Activated CD4-positive, alpha-beta T cell treated with anti-CD3 and anti-CD28 coated beads for 36 hours (primary cell): ENCODE measurements at regions of chr10 and their contacts with region 1.

Region 1: DNA sequence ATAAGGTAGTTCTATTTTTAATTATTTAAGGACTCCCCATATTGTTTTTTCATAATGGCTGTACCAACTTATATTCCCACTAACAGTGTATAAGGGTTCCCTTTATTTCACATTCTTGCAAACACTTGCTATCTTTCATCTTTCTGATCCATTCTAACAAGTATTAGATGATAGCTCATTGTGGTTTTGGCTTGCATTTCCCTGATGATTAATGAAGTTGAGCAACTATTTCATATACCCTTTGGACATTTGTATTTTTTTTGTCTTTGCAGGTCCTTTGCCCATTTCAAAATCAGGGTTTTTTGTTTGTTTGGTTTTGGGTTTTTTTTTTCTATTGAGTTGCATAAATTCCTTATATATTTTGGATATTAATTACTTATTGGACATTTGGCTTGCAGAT is 107.2 kb downstream of the EPC1 start:
- DNase-seq: no peak
- ATAC-seq: no peak
- H3K4me3 Mint-ChIP-seq: no peak overlapping the region
- H3K27ac Mint-ChIP-seq: no peak overlapping the region
- H3K4me1 Mint-ChIP-seq: peaks cover 13% of the 10 kb centered on the region
- H3K27me3 Mint-ChIP-seq: no peaks in the 10 kb centered on the region

Region 2: DNA sequence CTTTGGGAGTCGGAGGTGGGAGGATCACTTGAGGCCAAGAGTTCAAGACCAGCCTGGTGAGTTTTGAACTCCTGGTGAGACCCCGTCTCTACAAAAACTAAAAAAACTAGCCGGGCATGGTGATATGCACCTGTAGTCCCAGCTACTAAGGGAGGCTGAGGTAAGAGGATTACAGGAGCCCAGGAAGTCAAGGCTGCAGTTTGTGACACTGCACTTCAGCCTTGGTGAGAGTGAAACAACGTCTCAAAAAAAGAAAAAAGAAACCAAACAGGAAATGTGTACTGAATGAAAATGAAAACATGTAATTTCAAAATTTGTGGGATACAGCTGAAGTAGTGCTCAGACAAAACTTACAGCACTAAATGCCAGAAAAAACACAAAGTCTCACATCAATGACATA is 318.7 kb before region 1 on chr10:
- CTCF ChIA-PET with region 1: no interaction called
- POLR2A ChIA-PET with region 1: no interaction called
- intact Hi-C with region 1: loop called in 1 of 2 experiments (anchors 5 kb)
- DNase-seq: peak; percentile 32
- ATAC-seq: peak; percentile 75
- H3K4me3 Mint-ChIP-seq: peak overlapping the region; percentile 59
- H3K27ac Mint-ChIP-seq: peak overlapping the region; percentile 88
- H3K4me1 Mint-ChIP-seq: peaks cover 73% of the 10 kb centered on the region
- H3K27me3 Mint-ChIP-seq: no peaks in the 10 kb centered on the region

Region 3: DNA sequence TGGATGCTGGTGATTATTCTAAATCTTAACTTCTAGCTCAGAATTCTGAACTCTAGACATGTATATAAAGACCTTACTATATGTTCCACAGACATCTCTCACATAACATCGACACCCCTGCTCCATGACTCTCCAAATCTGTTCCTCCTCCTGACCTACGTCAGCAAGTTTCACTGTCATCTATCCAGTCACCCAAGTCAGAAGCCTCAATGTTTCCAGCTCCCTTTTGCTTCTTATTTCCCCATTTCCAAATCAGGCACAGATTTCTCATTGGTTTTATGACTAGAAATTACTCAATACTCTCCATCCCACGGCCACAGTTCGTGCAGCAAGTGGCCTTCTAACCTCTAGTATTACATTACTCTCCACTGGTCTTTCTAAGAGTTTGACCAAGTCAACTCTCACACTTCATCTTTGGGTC is 78.7 kb after region 1 on chr10:
- CTCF ChIA-PET with region 1: interaction called, 6 read pairs
- POLR2A ChIA-PET with region 1: no interaction called
- intact Hi-C with region 1: loop called in 1 of 2 experiments (anchors 1 kb)
- DNase-seq: peak; percentile 38
- ATAC-seq: peak; percentile 71
- H3K4me3 Mint-ChIP-seq: peak overlapping the region; percentile 1
- H3K27ac Mint-ChIP-seq: peak overlapping the region; percentile 69
- H3K4me1 Mint-ChIP-seq: peaks cover 87% of the 10 kb centered on the region
- H3K27me3 Mint-ChIP-seq: no peaks in the 10 kb centered on the region

Region 4: DNA sequence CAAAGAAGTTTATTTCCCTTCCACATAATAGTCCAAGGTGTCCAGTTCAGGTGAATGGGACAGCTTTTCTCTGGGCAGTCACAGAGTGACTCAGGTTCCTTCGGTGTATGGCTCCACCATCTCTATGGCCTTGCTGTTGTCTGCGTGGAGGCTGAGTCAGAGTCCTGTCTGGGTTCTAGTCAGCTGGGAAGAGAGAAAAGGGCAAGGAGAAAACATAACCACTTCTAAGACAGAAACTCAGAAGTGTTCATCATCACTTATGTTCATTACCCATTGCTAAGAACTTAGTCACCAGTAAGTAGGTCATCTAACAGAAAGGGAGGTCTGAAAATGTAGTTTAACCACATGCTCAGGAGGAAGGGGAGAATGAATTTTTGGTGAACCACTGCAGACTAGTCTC is 173.7 kb after region 1 on chr10:
- CTCF ChIA-PET with region 1: no interaction called
- POLR2A ChIA-PET with region 1: no interaction called
- intact Hi-C with region 1: loop called in 1 of 2 experiments (anchors 1 kb)
- DNase-seq: peak; percentile 73
- ATAC-seq: peak; percentile 98
- H3K4me3 Mint-ChIP-seq: no peak overlapping the region
- H3K27ac Mint-ChIP-seq: no peak overlapping the region
- H3K4me1 Mint-ChIP-seq: peaks cover 9% of the 10 kb centered on the region
- H3K27me3 Mint-ChIP-seq: no peaks in the 10 kb centered on the region

Region 5: GRCh38 chr10:32481606-32482005 is 241.8 kb after region 1 on chr10:
- CTCF ChIA-PET with region 1: no interaction called
- POLR2A ChIA-PET with region 1: no interaction called
- intact Hi-C with region 1: no loop called
- DNase-seq: no peak
- ATAC-seq: no peak
- H3K4me3 Mint-ChIP-seq: no peak overlapping the region
- H3K27ac Mint-ChIP-seq: no peak overlapping the region
- H3K4me1 Mint-ChIP-seq: no peaks in the 10 kb centered on the region
- H3K27me3 Mint-ChIP-seq: no peaks in the 10 kb centered on the region

Region 6: GRCh38 chr10:33134011-33134751 is 894.4 kb after region 1 on chr10:
- CTCF ChIA-PET with region 1: no interaction called
- POLR2A ChIA-PET with region 1: no interaction called
- intact Hi-C with region 1: loop called (anchors 1 to 5 kb)
- DNase-seq: peak; percentile 89
- ATAC-seq: peak; percentile 77
- H3K4me3 Mint-ChIP-seq: peak overlapping the region; percentile 25
- H3K27ac Mint-ChIP-seq: peak overlapping the region; percentile 83
- H3K4me1 Mint-ChIP-seq: peaks cover 83% of the 10 kb centered on the region
- H3K27me3 Mint-ChIP-seq: no peaks in the 10 kb centered on the region

Region 7: DNA sequence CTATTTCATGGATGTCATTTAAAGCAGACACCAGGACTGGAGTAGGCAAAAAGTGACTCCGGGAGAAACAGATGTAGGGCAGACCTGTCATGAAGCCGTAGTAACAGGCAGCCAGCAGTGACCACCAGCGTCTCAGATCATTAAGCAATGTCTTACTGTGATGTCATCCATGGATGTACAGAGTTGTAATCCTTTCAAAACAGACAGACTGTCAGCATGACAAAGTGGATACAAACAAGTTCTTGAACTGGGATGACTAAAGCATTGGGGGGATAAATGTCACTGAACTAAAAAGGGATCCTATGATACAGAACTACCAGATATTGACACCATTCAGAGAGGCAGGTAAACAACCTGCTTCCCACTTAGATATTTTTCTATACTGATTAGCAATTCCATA is 1899.8 kb after region 1 on chr10:
- CTCF ChIA-PET with region 1: no interaction called
- POLR2A ChIA-PET with region 1: no interaction called
- intact Hi-C with region 1: no loop called
- DNase-seq: no peak
- ATAC-seq: no peak
- H3K4me3 Mint-ChIP-seq: no peak overlapping the region
- H3K27ac Mint-ChIP-seq: no peak overlapping the region
- H3K4me1 Mint-ChIP-seq: no peaks in the 10 kb centered on the region
- H3K27me3 Mint-ChIP-seq: peaks cover 3% of the 10 kb centered on the region